Left ventricle myocardium superior (tissue), 1 donor: ENCODE measurements at regions of chr1 and their contacts with region 1.

Region 1: GRCh38 chr1:40951943-40952743 is 27.4 kb upstream of the CTPS1 start:
- DNase-seq: peak; percentile 82
- ATAC-seq: peak; percentile 86

Region 2: DNA sequence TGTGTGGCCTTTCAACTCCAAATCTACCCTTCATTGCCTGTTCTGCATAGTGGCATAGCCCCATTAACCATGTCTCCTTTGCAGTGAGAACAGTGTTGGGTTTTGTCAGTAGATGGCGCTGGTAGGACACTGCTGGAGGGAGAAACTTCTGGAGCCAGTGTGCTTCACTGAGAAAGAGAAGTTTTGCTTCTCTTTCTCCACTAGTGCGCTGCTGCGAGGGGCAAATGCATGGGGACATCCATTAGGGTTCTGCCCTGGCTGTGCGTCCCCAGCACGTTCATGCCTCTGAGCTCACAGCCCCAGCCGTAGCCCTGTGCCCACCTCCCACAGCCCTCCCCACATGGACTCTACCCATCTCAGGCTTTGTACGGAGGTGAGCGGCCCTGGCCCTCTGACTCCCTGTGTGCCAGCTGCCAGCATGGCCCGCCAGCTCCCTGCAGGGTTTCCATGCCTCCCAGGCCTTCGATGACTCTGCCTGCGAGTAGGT is 339.8 kb before region 1 on chr1:
- intact Hi-C with region 1: loop called (anchors 10 kb)
- DNase-seq: no peak
- ATAC-seq: peak; percentile 93

Region 3: GRCh38 chr1:40849801-40850592 is 102.1 kb before region 1 on chr1:
- intact Hi-C with region 1: loop called (anchors 5 kb)
- DNase-seq: peak; percentile 72
- ATAC-seq: peak; percentile 90